AG04449 (cell line): ENCODE measurements at regions of chr12 and their contacts with region 1.

Region 1: GRCh38 chr12:47742253-47742825 is 16.3 kb downstream of the RAPGEF3 start:
- DNase-seq: no peak
- H3K4me3 ChIP-seq: no peak overlapping the region
- CTCF ChIP-seq: peak; percentile 97

Region 2: GRCh38 chr12:47517122-47517521 is 225.2 kb before region 1 on chr12:
- CTCF ChIA-PET with region 1: no interaction called
- POLR2A ChIA-PET with region 1: no interaction called
- DNase-seq: no peak
- H3K4me3 ChIP-seq: no peak overlapping the region
- CTCF ChIP-seq: no peak

Region 3: GRCh38 chr12:47725893-47726292 is 16.4 kb before region 1 on chr12:
- CTCF ChIA-PET with region 1: interaction called, 308 read pairs
- POLR2A ChIA-PET with region 1: no interaction called
- DNase-seq: peak; percentile 57
- H3K4me3 ChIP-seq: no peak overlapping the region
- CTCF ChIP-seq: no peak

Region 4: DNA sequence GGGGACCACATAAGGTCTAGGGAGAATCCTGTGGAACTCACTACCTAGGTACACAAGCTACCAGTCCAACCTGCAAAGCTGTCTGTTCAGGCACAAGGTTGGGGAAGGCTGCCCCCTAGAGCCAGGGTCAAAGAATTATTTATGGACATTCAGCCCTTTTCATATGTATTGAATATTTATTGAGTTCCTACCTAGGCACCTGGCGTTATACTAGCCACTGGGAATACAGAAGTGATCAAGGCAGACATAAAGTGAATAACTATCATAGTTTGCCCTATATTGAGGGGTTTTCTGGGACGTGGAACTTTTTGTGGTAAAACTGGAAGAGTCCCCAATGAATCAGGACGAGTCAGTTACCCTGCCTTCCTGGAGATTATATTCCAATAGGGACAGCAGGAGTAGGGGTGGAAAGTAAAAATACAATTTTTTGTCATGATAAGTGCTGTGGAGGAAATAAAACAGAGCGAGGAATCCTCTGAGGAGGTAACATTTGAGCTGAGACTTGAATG is 24.9 kb after region 1 on chr12:
- CTCF ChIA-PET with region 1: interaction called, 1,419 read pairs
- POLR2A ChIA-PET with region 1: no interaction called
- DNase-seq: no peak
- H3K4me3 ChIP-seq: no peak overlapping the region
- CTCF ChIP-seq: peak; percentile 29

Region 5: DNA sequence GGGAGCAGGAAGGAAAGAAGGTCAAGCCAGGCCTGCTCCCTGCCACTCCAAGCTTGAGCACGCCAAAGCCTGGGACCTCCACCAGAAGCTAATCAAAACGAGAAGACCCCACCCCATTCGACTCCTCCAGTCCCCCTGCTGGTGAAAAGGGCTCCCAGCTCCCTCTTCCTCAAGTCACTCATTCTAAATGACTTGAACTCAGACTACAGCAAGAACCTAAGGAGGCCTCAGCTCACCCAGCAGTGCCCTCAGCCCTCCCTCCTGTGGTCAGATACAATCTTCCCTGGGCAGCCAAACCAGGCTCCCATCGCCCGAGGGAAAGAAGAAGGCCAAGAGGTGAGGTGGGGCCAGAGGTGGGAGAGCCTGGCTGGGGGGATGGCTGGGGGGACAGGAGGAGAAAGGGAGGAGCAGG is 60.0 kb after region 1 on chr12:
- CTCF ChIA-PET with region 1: interaction called, 15 read pairs
- POLR2A ChIA-PET with region 1: no interaction called
- DNase-seq: no peak
- H3K4me3 ChIP-seq: no peak overlapping the region
- CTCF ChIP-seq: peak; percentile 20